ENCODE measurements at regions of chr7 and their contacts with region 1.

Region 1: DNA sequence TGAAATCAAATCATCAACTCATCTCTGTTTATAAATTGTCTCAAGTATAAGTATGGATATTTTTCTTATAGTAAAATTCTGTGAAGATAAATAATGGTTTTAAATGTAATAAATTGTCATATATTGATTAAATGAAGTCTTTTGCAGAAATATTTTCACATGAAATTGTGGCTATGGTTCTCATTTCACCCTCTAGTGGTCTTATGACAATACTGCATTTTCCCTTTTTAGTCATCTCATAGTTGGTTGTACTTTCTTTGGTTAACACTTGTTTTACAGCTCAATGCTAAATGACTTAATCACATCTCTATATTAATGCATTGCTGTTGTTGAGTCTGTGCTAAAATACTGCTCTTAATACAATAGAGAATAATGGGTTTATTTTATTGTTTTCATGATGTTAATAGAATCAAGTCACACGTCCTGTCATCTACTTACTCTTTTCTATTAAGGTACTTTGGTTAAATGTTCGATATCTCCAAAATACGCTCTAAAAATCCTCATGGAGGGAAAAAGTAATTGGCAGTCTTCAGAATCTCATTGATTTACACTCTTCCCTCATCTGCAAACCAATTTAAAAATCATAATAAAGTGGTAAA is 38.0 kb upstream of the CACNA2D1 start:
- DNase-seq: peak; percentile 40
- H3K4me3 ChIP-seq: no peak overlapping the region
- H3K27ac ChIP-seq: no peak overlapping the region
- H3K4me1 ChIP-seq: no peaks in the 10 kb centered on the region
- H3K27me3 ChIP-seq: no peaks in the 10 kb centered on the region
- CTCF ChIP-seq: peak; percentile 84

Region 2: DNA sequence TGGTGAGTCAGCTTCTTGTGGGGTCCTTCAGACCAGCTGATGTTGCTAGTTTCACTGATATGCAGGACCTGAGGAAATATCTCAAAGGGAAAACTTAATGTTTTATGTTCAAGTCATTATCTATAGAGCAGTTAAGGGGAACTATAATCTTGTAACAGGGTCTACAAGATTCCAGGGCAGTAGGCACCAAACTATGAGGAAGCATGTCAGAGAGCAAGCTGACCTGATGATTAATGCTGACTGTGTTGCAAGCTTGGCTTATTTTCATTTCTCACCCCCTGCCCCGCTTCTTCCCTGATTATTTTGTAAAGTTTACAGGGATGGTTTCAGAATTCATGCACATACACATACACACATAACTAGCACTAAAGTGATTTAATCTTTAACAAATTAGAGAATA is 46.2 kb after region 1 on chr7:
- CTCF ChIA-PET with region 1: interaction called, 14 read pairs
- POLR2A ChIA-PET with region 1: no interaction called
- intact Hi-C with region 1: no loop called
- DNase-seq: no peak
- H3K4me3 ChIP-seq: no peak overlapping the region
- H3K27ac ChIP-seq: no peak overlapping the region
- H3K4me1 ChIP-seq: peaks cover 24% of the 10 kb centered on the region
- H3K27me3 ChIP-seq: peaks cover 10% of the 10 kb centered on the region
- CTCF ChIP-seq: no peak

Region 3: GRCh38 chr7:82810558-82811259 is 329.1 kb after region 1 on chr7:
- CTCF ChIA-PET with region 1: no interaction called
- POLR2A ChIA-PET with region 1: no interaction called
- intact Hi-C with region 1: no loop called
- DNase-seq: peak; percentile 92
- H3K4me3 ChIP-seq: no peak overlapping the region
- H3K27ac ChIP-seq: no peak overlapping the region
- H3K4me1 ChIP-seq: peaks cover 24% of the 10 kb centered on the region
- H3K27me3 ChIP-seq: no peaks in the 10 kb centered on the region
- CTCF ChIP-seq: peak; percentile 88

Region 4: GRCh38 chr7:82975811-82976468 is 494.3 kb after region 1 on chr7:
- CTCF ChIA-PET with region 1: no interaction called
- POLR2A ChIA-PET with region 1: no interaction called
- intact Hi-C with region 1: no loop called
- DNase-seq: no peak
- H3K4me3 ChIP-seq: no peak overlapping the region
- H3K27ac ChIP-seq: no peak overlapping the region
- H3K4me1 ChIP-seq: no peaks in the 10 kb centered on the region
- H3K27me3 ChIP-seq: peaks cover 6% of the 10 kb centered on the region
- CTCF ChIP-seq: no peak

Measured in A673 (cell line).